Heart right ventricle (tissue), 16 donors: ENCODE measurements at regions of chr2 and their contacts with region 1.

Region 1: DNA sequence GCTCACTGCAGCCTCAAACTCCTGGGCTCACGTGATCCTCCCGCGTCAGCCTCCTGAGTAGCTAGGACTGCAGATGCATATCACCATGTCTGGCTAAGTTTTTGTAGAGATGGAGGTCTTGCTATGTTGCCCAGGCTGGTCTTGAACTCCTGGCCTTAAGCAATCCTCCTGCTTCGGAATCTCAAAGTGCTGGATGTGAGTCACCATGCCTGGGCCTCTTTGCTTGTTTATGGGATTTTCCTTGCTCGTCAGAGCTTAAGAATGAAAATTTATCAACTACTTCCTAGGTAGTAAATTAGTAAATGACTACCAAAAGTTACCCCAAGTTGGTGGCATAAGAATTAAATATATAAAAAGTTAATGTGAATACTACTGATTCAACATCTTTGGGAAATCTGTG is 51.0 kb downstream of the ACTR3 start:
- DNase-seq: no peak
- ATAC-seq: no peak
- H3K4me3 ChIP-seq: no peak overlapping the region
- H3K27ac ChIP-seq: no peak overlapping the region
- H3K4me1 ChIP-seq: no peaks in the 10 kb centered on the region
- H3K27me3 ChIP-seq: no peaks in the 10 kb centered on the region
- CTCF ChIP-seq: no peak

Region 2: DNA sequence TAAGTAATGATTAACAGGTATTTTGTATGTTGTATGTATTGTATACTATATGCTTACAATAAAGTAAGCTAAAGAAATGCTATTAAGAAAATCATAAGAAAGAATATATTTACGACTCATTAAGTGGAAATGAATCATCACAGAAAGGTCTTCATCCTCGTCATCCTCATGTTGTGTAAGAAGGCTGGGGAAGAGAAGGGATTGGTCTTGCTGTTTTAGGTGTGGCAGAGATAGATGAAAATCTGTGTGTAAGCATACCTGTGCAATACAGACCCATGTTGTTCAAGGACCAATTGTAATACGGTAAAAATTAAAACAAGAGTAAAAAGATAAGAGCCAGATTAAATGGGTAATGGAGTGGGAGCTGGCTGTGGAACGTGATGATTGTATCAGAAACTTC is 201.0 kb before region 1 on chr2:
- intact Hi-C with region 1: loop called in 1 of 10 experiments (anchors 10 kb)
- DNase-seq: no peak
- ATAC-seq: no peak
- H3K4me3 ChIP-seq: no peak overlapping the region
- H3K27ac ChIP-seq: no peak overlapping the region
- H3K4me1 ChIP-seq: no peaks in the 10 kb centered on the region
- H3K27me3 ChIP-seq: no peaks in the 10 kb centered on the region
- CTCF ChIP-seq: no peak